BJ (cell line): ENCODE measurements at regions of chr15 and their contacts with region 1.

Region 1: GRCh38 chr15:41989259-41989933 is 17.0 kb upstream of the EHD4 start:
- DNase-seq: no peak
- H3K4me3 ChIP-seq: no peak overlapping the region
- H3K27me3 ChIP-seq: peaks cover 10% of the 10 kb centered on the region
- CTCF ChIP-seq: peak; percentile 99

Region 2: DNA sequence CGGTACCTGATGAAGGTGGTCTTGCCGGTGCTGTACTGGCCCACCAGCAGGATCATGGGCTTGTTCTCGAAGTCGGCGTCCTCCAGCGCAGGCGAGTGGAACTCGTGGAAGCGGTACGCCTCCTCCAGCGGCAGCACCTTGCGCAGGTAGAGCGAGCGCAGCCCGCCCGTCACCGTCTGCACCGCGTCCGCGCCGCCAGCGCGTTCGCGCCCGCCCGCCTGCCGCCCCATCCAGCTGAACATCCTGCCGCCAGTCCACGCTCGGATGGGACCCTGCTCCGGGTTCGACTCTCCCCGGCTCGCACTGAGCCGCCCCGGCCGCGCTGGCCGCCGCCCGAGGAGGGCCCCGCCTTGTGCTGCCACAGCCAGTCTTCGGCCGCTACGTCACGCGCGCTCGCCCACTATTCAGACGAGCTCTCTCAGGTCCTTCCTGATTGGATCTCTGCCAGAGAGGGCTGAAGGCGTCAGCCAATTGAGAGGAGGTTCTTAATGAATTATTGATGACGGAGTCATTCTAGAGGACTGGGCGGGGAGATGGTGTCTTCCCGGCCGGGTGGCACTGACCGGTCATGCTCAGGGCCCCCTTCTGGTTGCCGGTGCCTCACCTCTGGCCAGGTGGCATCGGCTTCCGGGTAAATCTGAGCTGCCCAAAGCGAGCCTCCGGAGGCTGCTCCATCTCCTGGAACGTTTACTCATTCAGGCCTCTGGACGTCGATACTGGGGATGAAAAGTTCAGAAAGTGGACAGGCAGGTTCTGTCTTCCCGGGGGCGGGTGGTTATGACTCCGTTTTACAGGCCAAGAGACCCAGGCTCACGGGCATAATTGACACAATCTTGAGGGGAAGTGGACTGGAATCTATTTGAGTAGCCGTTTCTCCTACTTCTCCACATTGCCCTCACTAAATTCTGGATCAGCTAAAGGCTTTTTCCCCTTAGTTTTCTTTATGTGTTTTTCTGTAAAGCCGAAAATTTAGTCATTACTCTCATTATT is 16.8 kb before region 1 on chr15 and contains the start of gene EHD4:
- CTCF ChIA-PET with region 1: interaction called, 37 read pairs
- POLR2A ChIA-PET with region 1: no interaction called
- DNase-seq: peak; percentile 86
- H3K4me3 ChIP-seq: peak within 1 kb of the TSS; percentile 59
- H3K27me3 ChIP-seq: no peaks in the 10 kb centered on the region
- CTCF ChIP-seq: peak; percentile 48
- polyA plus RNA-seq, gene EHD4: 14.9 and 17.0 TPM in 2 replicates

Region 3: GRCh38 chr15:41999290-42000285 is 10.2 kb after region 1 on chr15:
- CTCF ChIA-PET with region 1: interaction called, 42 read pairs
- POLR2A ChIA-PET with region 1: no interaction called
- DNase-seq: no peak
- H3K4me3 ChIP-seq: no peak overlapping the region
- H3K27me3 ChIP-seq: peaks cover 14% of the 10 kb centered on the region
- CTCF ChIP-seq: no peak

Region 4: GRCh38 chr15:42056934-42057779 is 67.8 kb after region 1 on chr15:
- CTCF ChIA-PET with region 1: interaction called, 102 read pairs
- POLR2A ChIA-PET with region 1: no interaction called
- DNase-seq: no peak
- H3K4me3 ChIP-seq: no peak overlapping the region
- H3K27me3 ChIP-seq: peaks cover 18% of the 10 kb centered on the region
- CTCF ChIP-seq: peak; percentile 68

Region 5: GRCh38 chr15:42084460-42085235 is 95.3 kb after region 1 on chr15:
- CTCF ChIA-PET with region 1: interaction called, 37 read pairs
- POLR2A ChIA-PET with region 1: no interaction called
- DNase-seq: no peak
- H3K4me3 ChIP-seq: no peak overlapping the region
- H3K27me3 ChIP-seq: peaks cover 37% of the 10 kb centered on the region
- CTCF ChIP-seq: peak; percentile 93

Region 6: DNA sequence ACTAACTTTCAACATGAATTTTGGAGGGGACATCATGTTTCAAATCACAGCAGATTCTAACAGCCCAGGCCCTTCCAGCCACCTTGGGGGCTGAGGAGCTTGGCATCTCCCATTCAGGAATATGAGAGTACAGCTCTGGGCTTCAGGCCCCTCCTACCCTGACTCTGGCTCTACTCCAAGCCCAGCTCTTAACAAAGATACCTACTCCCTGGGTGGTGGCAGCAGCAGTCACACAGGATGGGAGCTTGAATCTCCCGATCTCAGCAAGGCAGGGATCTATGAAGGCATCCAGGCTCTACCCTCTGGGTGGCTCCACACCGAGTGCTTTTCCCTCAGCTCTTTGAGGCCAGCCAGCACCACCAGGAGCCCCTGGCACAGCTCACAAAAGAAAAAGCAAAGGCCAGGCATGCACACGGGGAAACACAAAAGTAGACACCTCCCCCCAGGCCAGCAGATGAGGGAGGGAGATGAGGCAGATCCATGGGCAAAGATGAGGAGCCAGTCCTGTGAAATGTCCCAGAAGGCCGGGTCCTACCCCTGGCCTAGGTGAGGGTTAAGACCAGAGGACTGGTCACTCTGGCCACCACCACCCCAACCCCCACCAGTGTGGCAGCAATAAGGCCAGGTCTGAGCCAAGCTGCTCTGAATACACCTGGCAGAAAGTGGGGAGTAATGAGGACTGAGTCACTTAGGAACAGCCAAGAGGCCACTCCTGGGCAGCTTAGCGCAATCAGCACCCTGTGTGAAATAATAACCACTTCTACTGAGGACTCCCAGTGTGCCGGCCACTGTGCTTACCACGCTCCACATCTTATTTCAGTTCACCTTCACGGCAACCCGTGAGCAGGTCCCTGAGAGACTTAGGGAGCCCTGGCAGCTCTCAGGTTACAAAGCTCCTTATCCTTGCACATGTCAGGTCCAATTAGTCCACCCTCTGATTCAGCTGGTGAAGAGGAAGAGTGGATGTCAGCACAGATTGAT is 142.7 kb after region 1 on chr15:
- CTCF ChIA-PET with region 1: interaction called, 59 read pairs
- POLR2A ChIA-PET with region 1: no interaction called
- DNase-seq: no peak
- H3K4me3 ChIP-seq: no peak overlapping the region
- H3K27me3 ChIP-seq: peaks cover 21% of the 10 kb centered on the region
- CTCF ChIP-seq: no peak

Region 7: DNA sequence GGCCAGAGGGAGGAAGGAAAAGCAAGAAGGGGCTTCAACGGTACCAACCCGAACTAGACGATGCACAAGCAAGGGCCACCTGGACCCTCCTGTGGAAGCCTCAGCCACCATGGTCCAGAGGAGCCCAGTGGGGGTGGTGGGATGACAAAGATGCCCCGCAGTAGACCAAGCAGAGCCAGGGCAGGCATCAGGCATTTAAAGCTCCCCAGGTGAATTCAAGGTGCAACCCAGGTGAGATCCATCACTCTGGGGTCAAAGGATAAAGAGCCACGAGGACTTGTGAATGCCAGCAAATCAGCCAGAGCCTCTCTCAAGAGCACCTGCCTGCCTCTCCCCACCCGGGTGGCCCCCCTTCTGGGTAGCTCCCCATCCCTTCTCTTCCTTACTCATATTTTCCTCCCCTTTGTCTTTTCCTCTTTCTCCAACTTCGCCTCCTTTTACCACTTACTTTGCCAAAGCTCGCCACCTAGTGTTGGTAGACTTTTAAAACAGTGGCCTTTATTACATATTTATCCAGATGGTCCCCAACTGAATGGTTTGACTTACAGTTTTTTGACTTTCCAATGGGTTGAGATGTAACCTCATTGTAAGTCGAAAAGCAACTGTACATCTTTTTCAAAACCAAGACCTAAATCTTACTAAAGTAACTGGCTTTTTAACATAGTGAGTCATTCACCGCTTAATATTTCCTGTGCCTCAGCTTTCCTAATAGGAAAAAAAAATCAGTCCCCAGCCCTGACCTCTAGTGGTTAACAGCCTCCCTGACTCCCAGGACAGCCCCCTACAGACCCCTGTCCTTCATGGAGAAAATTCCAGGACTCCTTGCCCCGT is 148.2 kb after region 1 on chr15:
- CTCF ChIA-PET with region 1: interaction called, 59 read pairs
- POLR2A ChIA-PET with region 1: no interaction called
- DNase-seq: peak; percentile 2
- H3K4me3 ChIP-seq: no peak overlapping the region
- H3K27me3 ChIP-seq: peaks cover 11% of the 10 kb centered on the region
- CTCF ChIP-seq: peak; percentile 63